Activated CD4-positive, alpha-beta T cell treated with anti-CD3 and anti-CD28 coated beads for 36 hours (primary cell): ENCODE measurements at regions of chr11 and their contacts with region 1.

Region 1: DNA sequence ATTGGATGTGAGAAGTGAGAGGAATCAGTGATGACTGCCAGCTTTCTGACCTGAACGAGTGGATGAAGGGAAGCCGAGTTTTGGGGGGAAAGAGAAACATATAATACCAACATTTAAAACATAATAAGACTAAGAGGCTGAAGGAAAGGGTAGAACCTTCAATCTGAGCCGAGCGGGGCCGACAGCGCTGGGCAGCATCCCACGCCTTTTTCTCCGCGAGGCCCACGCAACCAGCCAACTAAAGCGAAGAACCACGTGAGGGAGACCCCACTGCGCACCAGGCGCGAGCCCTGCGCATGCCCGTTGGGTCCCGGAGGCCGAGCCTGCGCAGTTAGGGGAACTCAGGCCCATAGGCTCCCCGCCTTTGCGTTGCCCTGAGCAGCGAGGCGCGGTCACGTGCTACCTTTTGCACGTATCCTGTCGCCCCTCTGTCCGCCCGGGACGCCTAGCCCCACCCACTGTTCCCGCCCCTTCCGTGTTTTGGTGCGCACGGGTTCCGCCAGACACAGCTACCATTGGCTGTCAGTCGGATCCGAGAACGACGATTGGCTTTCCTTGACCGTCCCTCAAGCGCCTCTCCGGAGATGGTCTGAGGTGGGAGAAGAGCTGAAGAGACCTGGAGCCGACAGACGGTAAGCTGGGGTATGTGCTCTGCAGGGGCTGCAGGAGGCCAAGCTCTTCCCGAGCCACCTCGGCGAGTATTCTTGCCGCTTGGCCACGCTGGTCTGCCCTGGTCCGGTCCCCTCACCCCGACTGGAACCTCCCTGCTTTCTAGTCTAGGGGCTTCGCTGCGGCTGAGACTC is at the start of gene HINFP:
- DNase-seq: peak; percentile 100
- ATAC-seq: peak; percentile 98
- H3K4me3 Mint-ChIP-seq: peak within 1 kb of the TSS; percentile 94
- H3K27ac Mint-ChIP-seq: peak within 1 kb of the TSS; percentile 91
- H3K4me1 Mint-ChIP-seq: peaks cover 25% of the 10 kb centered on the region
- H3K27me3 Mint-ChIP-seq: no peaks in the 10 kb centered on the region
- total RNA-seq, gene HINFP: 24.0 to 27.2 TPM

Region 2: DNA sequence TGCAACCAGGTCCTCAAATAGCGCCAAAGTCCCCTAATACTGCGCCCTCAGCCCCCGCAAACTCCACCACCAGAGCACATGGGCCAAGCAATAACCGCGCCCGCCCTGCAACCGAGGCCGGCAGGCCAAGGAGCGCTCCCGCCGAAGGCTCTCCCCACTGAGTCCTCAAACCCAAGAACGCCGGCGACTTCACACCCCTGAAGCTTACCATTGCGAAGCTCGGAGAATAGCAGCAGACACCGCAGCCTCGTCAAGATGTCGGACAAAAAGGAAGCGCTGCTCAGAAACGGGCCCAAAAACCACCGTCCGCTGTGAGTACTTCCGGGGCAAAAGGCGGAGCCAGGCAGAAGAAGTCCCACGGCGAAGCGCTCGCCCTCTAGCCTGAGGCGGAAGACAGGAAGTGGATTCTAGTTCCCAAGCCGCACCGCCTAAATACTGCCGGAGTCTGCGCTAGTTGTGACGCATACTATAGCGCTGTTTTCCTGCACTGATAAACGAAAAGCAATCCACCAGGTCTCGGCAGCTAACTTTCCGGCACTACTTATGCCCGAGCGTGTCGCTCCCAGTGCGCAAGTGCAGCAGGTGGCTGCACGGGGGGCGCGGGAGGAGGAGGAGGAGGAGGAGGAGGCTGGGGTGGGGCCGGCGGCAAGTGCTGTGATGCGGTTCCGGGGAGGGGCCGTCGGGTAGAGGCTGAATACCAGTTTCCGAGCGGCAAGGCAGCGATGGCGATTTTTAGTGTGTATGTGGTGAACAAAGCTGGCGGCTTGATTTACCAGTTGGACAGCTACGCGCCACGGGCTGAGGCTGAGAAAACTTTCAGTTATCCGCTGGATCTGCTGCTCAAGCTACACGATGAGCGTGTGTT is 102.9 kb before region 1 on chr11 and contains the starts of genes RPS25 and TRAPPC4:
- CTCF ChIA-PET with region 1: no interaction called
- POLR2A ChIA-PET with region 1: no interaction called
- intact Hi-C with region 1: loop called (anchors 1 kb)
- DNase-seq: peak; percentile 98
- ATAC-seq: peak; percentile 92
- H3K4me3 Mint-ChIP-seq: peak within 1 kb of the TSS; percentile 99
- H3K27ac Mint-ChIP-seq: peak within 1 kb of the TSS; percentile 99
- H3K4me1 Mint-ChIP-seq: peaks cover 53% of the 10 kb centered on the region
- H3K27me3 Mint-ChIP-seq: no peaks in the 10 kb centered on the region
- total RNA-seq, gene RPS25: 1,590 to 1,820 TPM
- total RNA-seq, gene TRAPPC4: 62.2 to 81.9 TPM

Region 3: DNA sequence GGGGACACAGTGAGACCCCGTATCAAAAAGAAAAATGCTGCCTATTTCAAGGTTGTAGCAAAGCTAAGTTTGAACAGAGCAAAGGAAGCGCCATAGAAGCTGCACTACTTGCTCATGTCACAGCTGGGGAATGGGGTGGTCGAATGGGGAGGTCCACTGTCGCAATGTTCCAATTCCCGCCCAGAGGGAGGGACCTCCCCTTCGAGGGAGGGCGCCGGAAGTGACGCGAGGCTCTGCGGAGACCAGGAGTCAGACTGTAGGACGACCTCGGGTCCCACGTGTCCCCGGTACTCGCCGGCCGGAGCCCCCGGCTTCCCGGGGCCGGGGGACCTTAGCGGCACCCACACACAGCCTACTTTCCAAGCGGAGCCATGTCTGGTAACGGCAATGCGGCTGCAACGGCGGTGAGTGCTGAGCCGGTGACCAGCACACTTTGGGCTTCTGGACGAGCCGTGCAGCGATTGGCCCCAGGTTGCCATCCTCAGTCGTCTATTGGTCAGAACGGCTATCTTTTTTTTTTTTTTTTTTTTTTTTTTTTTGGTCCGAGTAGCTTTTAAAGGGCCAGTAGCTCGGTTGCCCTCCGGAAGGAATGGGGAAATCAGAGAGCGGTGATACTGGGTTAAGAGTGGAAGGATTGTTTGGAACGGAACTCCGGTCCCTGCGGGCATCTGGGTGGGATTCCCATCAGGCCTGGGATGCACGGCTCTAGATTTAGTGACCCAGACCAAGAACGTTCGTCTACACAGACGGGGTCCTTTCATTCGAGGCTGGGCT is 36.4 kb before region 1 on chr11 and contains the start of gene HMBS:
- CTCF ChIA-PET with region 1: no interaction called
- POLR2A ChIA-PET with region 1: interaction called, 5 read pairs
- intact Hi-C with region 1: loop called in 1 of 2 experiments (anchors 1 kb)
- DNase-seq: peak; percentile 96
- ATAC-seq: peak; percentile 94
- H3K4me3 Mint-ChIP-seq: peak within 1 kb of the TSS; percentile 97
- H3K27ac Mint-ChIP-seq: peak within 1 kb of the TSS; percentile 92
- H3K4me1 Mint-ChIP-seq: peaks cover 22% of the 10 kb centered on the region
- H3K27me3 Mint-ChIP-seq: no peaks in the 10 kb centered on the region
- total RNA-seq, gene HMBS: 39.8 to 41.8 TPM

Region 4: GRCh38 chr11:119144825-119145486 is 23.7 kb after region 1 on chr11:
- CTCF ChIA-PET with region 1: no interaction called
- POLR2A ChIA-PET with region 1: no interaction called
- intact Hi-C with region 1: loop called in 1 of 2 experiments (anchors 1 kb)
- DNase-seq: peak; percentile 58
- ATAC-seq: peak; percentile 35
- H3K4me3 Mint-ChIP-seq: no peak overlapping the region
- H3K27ac Mint-ChIP-seq: no peak overlapping the region
- H3K4me1 Mint-ChIP-seq: peaks cover 8% of the 10 kb centered on the region
- H3K27me3 Mint-ChIP-seq: peaks cover 33% of the 10 kb centered on the region

Region 5: DNA sequence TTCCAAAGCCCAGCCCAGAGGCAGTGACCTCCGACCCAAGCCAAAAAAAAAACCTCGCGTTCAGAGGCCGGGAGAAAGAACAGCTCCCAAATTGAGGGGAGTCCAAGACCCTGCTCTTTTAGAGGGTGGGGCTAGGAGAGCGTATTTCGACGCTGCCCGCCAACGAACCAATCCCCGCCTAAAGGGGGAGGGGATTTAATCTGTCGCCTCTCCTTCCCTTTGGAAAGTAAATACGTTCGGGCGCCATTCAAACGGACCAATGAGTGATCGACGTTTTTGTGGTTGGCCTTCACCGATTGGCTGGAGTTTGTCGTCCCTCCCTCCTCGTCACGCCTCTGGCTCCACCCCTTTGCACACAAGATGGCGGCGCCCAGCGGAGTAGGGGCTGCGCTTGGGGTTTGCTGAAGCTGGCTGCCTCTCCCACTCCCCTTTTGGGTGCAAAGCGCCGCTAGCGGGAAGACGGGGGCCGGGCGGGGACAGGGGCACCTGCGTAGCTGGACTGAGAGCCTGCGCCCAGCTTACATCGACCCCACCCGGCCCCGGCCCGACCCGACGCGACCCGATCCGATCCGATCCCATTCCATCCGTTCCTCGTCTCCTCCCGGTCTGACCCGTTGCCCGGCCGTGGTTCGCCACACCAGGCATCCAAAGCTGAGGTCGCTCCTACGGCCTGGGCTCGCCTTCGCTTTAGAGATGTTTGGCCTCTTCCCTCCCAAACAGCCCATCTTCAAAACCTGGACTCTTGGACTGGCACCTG is 213.1 kb after region 1 on chr11 and contains the start of gene RNF26:
- CTCF ChIA-PET with region 1: no interaction called
- POLR2A ChIA-PET with region 1: no interaction called
- intact Hi-C with region 1: loop called in 1 of 2 experiments (anchors 1 kb)
- DNase-seq: peak; percentile 96
- ATAC-seq: peak; percentile 96
- H3K4me3 Mint-ChIP-seq: peak within 1 kb of the TSS; percentile 99
- H3K27ac Mint-ChIP-seq: peak within 1 kb of the TSS; percentile 99
- H3K4me1 Mint-ChIP-seq: peaks cover 29% of the 10 kb centered on the region
- H3K27me3 Mint-ChIP-seq: peaks cover 7% of the 10 kb centered on the region
- total RNA-seq, gene RNF26: 29.9 TPM